Calu3 (cell line): ENCODE measurements at regions of chr1 and their contacts with region 1.

Region 1: DNA sequence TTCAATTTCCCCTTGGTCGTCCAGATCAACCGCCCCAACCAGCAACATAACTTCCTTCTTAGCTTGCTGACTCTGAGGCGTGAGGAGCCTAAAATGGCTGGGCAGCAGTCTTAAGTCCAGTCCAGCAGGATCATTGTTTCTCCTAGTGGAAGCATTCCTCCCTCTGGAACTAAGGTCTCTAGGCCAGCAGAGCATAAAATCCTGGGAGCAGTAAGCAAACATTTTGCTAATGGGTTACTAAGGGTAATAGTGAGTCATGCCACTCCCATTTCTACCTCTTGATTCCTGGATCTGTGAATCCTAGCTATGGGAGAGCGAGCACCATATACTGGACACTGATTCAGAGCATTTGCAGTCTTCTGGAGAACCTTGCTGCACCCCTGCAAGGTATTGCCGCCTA is 59.9 kb downstream of the ADSS2 start:
- DNase-seq: no peak
- H3K4me3 Mint-ChIP-seq: no peak overlapping the region
- H3K27ac Mint-ChIP-seq: peak overlapping the region; percentile 59
- H3K4me1 Mint-ChIP-seq: peaks cover 28% of the 10 kb centered on the region
- H3K27me3 Mint-ChIP-seq: no peaks in the 10 kb centered on the region
- CTCF ChIP-seq: no peak

Region 2: DNA sequence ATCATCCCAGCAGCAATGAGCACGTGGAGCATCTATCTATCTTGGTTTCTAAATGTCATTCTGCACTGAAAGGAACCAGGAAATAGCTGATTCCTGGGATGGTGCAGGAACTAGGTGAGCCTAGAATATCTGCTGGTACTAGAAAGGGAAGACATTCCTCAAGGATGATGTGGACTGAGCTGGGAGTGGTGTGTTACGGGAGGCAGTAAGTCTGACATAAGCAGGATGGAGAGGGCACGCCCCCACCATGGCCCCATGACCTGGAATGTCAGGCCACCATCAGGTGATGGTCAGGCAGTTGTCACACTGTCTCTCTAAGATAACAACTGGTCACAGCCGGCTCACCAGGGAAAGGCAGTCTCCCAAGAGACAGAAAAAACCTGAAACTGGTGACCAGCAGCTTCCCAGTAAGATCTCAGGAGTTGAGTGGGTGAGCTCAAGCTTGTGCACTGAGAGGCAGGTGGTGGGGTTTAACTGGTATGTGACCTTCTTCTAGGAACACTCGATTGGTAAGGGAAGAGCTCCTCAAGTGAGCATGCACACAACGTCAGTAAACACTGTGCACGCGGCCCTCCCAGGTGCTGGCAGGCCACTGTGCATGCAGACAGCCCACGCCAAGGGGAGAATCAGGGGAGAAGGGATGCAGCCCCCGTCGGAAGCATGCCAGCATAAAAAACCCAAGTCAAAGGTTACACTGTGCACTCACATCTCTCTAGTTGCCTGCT is 88.7 kb before region 1 on chr1:
- CTCF ChIA-PET with region 1: no interaction called
- intact Hi-C with region 1: loop called (anchors 5 kb)
- DNase-seq: peak; percentile 79
- H3K4me3 Mint-ChIP-seq: peak overlapping the region; percentile 56
- H3K27ac Mint-ChIP-seq: peak overlapping the region; percentile 92
- H3K4me1 Mint-ChIP-seq: peaks cover 49% of the 10 kb centered on the region
- H3K27me3 Mint-ChIP-seq: no peaks in the 10 kb centered on the region
- CTCF ChIP-seq: no peak

Region 3: GRCh38 chr1:244466724-244467123 is 75.0 kb after region 1 on chr1:
- CTCF ChIA-PET with region 1: no interaction called
- intact Hi-C with region 1: no loop called
- DNase-seq: no peak
- H3K4me3 Mint-ChIP-seq: no peak overlapping the region
- H3K27ac Mint-ChIP-seq: no peak overlapping the region
- H3K4me1 Mint-ChIP-seq: no peaks in the 10 kb centered on the region
- H3K27me3 Mint-ChIP-seq: no peaks in the 10 kb centered on the region
- CTCF ChIP-seq: no peak